PC-9 (cell line): ENCODE measurements at regions of chr3 and their contacts with region 1.

Region 1: DNA sequence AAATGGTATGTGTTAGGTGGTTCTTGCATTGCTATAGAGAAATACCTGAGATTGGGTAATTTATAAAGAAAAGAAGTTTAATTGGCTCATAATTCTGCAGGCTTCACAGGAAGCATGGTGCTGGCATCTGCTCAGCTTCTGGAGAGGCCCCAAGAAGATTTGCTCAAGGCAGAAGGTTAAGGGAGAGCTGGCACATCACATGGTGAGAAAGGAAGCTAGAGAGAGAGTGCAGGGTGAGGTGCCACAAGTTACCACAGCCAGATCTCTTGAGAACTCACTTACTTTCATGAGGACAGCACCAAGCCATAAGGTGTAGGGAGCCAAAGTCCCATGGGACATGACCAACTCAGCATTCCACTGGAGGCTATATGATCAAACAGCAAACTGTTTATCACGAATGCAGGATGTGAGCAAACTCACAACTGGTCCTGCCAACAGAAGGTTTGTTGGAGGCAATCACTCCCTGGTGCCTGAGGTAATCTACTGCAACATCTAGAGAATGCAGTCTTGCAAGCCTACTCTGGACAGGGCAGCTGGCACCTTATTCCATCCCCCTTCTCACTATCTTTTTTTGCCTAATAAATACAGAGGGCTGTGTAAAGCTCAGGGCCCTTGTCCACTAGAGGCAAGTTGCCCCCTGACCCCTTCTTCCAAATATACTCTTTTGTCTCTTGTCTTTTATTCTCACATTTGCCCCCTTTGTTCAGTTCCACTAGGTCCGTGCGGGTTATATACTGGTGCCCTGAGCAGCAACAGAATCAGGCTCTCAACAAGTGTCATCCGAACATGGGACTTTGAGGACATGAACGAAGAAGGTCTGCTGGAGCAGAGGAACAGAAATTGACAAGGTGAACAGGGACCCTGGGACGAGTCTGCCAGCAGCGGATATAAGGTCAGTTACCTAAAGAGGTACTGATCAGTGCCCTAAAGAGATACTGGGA is 28.0 kb upstream of the CCR2 start:
- DNase-seq: peak; percentile 1 to 39
- H3K4me3 ChIP-seq: no peak overlapping the region
- H3K27ac ChIP-seq: no peak overlapping the region
- H3K4me1 ChIP-seq: no peaks in the 10 kb centered on the region
- H3K27me3 ChIP-seq: no peaks in the 10 kb centered on the region
- CTCF ChIP-seq: no peak

Region 2: DNA sequence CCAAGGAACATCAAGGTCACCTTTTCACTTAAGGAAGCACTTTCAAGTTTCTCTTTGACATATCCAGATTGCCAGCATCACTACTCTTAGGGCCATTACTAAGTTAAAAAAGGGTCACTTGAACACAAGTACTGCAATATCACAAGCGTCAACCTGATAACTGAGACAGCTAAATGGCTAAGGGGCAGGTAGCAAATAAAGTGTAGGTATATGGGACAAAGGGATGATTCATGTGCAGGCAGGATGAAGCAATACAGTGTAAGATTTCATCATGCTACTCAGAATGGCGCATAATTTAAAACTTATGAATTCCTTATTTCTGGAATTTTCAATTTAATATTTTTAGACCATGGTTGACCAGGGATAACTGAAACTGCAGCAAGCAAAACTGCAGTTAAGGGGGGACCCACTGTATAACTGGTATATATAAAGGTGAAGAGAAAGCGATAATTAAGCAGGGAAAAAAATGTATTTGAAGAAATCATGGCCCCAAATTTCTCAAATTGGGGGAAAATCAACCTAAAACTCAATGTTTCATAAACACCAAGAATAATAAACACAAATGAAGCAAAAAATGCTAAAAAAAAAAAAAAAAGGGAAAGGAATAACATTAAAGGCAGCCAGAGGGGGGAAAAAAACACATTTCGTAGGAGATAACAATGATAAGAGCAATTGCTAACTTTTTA is 130.9 kb before region 1 on chr3:
- CTCF ChIA-PET with region 1: no interaction called
- POLR2A ChIA-PET with region 1: no interaction called
- intact Hi-C with region 1: no loop called
- DNase-seq: no peak
- H3K4me3 ChIP-seq: no peak overlapping the region
- H3K27ac ChIP-seq: no peak overlapping the region
- H3K4me1 ChIP-seq: no peaks in the 10 kb centered on the region
- H3K27me3 ChIP-seq: no peaks in the 10 kb centered on the region
- CTCF ChIP-seq: no peak

Region 3: GRCh38 chr3:46524008-46524407 is 198.1 kb after region 1 on chr3:
- CTCF ChIA-PET with region 1: no interaction called
- POLR2A ChIA-PET with region 1: interaction called, 13 read pairs
- intact Hi-C with region 1: no loop called
- DNase-seq: no peak
- H3K4me3 ChIP-seq: no peak overlapping the region
- H3K27ac ChIP-seq: no peak overlapping the region
- H3K4me1 ChIP-seq: no peaks in the 10 kb centered on the region
- H3K27me3 ChIP-seq: no peaks in the 10 kb centered on the region
- CTCF ChIP-seq: no peak